Brain microvascular endothelial cell (primary cell): ENCODE measurements at regions of chr6 and their contacts with region 1.

Region 1: GRCh38 chr6:90478789-90479602 is 107.9 kb downstream of the MAP3K7 start:
- DNase-seq: peak; percentile 93
- H3K4me3 ChIP-seq: no peak overlapping the region
- H3K27ac ChIP-seq: no peak overlapping the region
- H3K27me3 ChIP-seq: no peaks in the 10 kb centered on the region
- CTCF ChIP-seq: peak; percentile 83

Region 2: DNA sequence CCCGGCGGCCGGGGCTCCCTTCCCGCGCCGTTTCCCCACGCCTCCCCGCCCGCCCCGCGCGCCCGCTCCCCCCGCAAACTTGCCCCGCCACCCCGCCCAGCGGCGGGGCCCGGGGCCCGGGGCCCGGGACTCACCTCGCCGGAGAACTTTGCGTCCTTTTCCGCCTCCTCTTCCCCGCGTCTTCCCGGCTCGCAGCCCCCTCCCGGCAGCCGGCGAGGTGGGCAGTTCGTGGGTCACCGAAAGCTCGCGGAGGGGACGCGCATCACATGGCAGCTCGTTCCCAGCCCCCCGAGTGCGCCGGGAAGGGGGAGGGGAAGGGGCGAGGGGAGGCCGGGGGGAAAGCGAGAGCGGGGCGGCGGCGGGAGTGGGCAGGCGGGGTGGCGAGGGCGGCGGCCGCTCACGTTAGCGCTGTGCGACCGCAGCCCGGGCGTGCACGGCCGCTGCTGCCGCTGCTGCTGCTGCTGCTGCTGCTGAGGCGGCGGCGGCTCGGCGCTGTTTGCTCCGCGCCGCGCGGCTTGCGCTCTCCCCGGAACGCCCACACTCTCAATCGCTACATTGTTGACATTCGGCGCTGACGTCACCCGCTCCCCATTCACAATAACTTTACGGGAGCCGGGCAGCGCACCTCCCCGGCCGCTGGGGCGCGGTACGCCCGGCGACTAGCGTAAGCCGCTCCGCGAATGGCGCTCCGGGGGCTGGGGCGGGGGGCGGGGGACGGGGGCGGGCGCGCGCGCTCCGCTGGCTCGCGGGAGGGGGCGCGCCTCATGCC is 182.5 kb before region 1 on chr6 and contains the start of gene BACH2:
- in situ Hi-C with region 1: loop called (anchors 25 kb)
- DNase-seq: peak; percentile 86
- H3K4me3 ChIP-seq: peak within 1 kb of the TSS; percentile 65
- H3K27ac ChIP-seq: no peak within 1 kb of the TSS
- H3K27me3 ChIP-seq: peaks cover 27% of the 10 kb centered on the region
- CTCF ChIP-seq: peak; percentile 37